ENCODE measurements at regions of chr5 and their contacts with region 1.

Region 1: DNA sequence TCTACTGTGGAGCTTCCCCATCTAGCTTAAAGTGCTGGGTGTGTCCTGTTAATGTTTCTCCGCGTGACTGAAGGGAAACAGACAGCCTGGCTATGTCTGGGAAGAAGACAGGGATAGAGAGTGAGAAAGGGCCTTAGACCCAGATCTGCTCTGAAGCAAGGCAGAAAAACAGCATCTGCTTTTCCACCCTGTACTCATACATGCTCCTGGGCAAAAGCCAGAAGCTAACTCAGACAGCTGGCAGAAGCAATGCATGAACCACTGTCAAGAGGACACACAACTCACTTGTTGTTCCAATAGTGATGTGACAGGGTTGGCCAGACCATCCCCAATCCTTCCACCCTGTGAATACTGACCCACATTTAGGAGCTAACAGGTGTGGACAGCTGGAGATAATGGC is 63.3 kb downstream of the DPYSL3 start:
- DNase-seq: no peak

Region 2: DNA sequence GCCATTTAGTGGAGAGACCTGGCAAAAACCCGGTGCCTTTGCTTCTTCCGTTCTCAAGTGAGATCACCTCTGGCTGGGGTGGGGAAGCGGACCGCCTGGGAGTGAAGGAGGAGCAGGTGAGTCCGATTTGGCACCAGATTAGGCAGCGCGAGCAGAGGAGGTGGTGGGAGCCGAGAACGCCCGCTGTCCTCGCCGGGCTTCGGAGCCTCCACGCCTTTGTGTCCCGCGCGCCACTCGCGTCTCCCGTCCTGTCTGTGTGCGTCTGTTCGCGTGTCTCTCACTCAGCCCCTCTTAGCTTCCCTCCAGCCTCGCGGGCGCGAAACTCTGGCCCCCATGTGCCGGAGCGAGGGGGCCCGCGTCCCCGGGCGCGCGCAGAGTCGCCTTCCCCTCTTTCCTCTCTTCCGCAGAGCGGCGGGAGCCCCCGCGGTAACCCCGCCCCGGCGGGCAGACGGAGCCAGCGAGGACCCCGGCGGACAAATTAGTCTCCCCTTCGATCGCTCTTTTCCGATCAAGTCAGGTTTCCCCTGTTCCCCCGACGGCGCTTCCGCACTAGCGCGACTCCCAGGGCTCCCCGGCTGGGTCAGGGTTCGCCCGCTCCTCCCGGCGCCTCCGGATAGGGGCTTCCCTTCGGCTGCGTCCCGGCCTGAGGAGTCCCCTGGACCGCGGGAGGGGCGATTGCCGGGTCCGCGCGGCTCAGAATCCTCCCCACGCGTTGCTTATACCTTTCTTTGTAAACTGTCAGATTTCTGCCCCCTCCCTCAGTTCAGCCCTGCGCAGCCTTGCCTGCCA is 1100.8 kb before region 1 on chr5:
- intact Hi-C with region 1: no loop called
- DNase-seq: no peak

Region 3: DNA sequence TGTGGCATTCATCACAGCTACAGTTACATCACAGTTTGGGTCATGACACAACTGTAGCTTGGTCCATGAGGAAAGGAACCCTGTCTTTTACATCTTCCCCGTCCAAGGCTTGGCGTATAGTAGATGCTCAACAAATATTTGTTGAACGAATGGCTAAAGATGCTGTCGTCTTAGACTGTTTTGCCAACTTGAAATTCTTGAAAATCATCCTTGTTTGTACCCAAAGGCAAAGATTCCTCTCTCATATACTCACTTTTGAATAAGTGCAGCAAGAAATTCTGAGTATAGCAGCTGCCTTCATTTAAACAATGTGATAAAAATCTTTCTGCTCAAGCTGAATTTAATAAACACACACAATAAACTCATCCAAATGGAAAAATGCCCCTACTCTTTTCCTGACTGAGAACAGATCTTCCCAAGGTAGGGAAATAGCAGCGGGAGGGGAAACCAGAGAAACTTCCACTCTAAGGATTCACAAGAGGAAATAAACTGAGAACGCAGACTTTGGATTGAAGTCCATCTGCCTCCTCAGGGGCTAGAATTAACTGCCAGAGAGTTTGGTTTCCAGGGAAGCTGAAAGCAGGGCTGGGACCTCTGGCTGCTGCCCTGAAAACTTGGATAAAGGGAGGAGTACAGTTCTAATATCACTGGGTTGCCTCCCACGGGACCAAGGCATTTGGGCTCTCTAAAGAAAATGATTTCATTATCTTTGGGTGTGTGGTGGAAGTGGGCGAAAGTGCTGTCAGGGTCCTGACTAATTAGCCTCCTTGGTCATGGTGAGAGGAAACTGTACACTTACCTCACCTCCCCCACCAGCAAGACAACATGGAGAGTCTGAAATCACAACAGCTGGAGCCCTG is 35.8 kb before region 1 on chr5:
- intact Hi-C with region 1: loop called in 1 of 2 experiments (anchors 5 kb)
- DNase-seq: peak; percentile 85

Region 4: GRCh38 chr5:147530530-147531389 is 84.2 kb after region 1 on chr5:
- intact Hi-C with region 1: no loop called
- DNase-seq: no peak